ENCODE measurements at regions of chr6 and their contacts with region 1.

Region 1: GRCh38 chr6:31940256-31940664 is 5.6 kb upstream of the CFB start:
- DNase-seq: peak; percentile 55
- ATAC-seq: peak; percentile 76
- H3K4me3 ChIP-seq: no peak overlapping the region
- H3K27ac ChIP-seq: no peak overlapping the region
- H3K4me1 ChIP-seq: peaks cover 11% of the 10 kb centered on the region
- H3K27me3 ChIP-seq: no peaks in the 10 kb centered on the region
- CTCF ChIP-seq: no peak
- POLR2A ChIP-seq: no peak
- RAD21 ChIP-seq: no peak

Region 2: DNA sequence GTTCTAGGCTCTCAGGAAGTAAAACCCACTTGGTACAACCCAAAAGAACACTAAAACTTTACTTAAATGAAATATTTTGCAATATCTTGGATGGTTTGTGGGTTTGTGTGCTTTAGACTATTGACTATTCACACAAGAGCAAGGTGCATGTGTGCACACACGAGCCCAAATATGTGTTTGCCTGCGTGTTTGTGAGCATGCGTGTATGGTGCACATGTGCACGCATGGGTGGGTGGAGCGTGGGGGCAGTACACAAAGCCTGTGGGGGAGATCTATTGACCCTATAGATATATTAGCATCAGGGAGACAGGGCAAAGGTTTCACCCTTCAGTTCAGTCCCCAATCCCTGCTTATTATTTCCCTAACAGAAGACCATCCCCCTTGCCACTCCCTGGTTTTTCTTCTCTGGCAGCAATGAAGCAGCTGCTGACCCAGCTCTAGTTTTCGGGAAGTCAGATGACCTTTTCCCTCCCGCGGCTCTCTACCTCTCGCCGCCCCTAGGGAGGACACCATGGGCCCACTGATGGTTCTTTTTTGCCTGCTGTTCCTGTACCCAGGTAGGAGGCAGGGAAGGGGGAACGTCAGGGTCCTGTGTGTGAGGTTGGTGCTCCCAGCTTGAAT is 12.9 kb before region 1 on chr6 and contains the start of gene C2:
- CTCF ChIA-PET with region 1: interaction called, 4 read pairs
- POLR2A ChIA-PET with region 1: no interaction called
- dilution Hi-C with region 1: no loop called
- in situ Hi-C with region 1: no loop called
- intact Hi-C with region 1: loop called (anchors 2 kb)
- DNase-seq: no peak
- ATAC-seq: no peak
- H3K4me3 ChIP-seq: no peak within 1 kb of the TSS
- H3K27ac ChIP-seq: no peak within 1 kb of the TSS
- H3K4me1 ChIP-seq: peaks cover 1% of the 10 kb centered on the region; the same call in 1 of the 2 replicates
- H3K27me3 ChIP-seq: no peaks in the 10 kb centered on the region
- CTCF ChIP-seq: no peak
- POLR2A ChIP-seq: no peak
- RAD21 ChIP-seq: no peak
- total RNA-seq, gene C2: under 0.01 and 0.18 TPM in 2 replicates

Region 3: GRCh38 chr6:31958741-31959739 is 18.8 kb after region 1 on chr6 and contains the starts of genes NELFE and SKIC2:
- CTCF ChIA-PET with region 1: no interaction called
- POLR2A ChIA-PET with region 1: no interaction called
- dilution Hi-C with region 1: no loop called
- in situ Hi-C with region 1: no loop called
- intact Hi-C with region 1: no loop called
- DNase-seq: peak; percentile 98
- ATAC-seq: peak; percentile 99
- H3K4me3 ChIP-seq: peak within 1 kb of the TSS; percentile 75
- H3K27ac ChIP-seq: peak within 1 kb of the TSS; percentile 74
- H3K4me1 ChIP-seq: peaks cover 7% of the 10 kb centered on the region; the same call in 1 of the 2 replicates
- H3K27me3 ChIP-seq: no peaks in the 10 kb centered on the region
- CTCF ChIP-seq: no peak
- POLR2A ChIP-seq: peak; percentile 64
- RAD21 ChIP-seq: peak; percentile 9; the same call in 1 of the 2 replicates
- total RNA-seq, gene NELFE: 76.0 and 90.8 TPM in 2 replicates
- total RNA-seq, gene SKIC2: 30.6 and 34.7 TPM in 2 replicates

Measured in IMR-90 (cell line).